WTC11 (cell line): ENCODE measurements at regions of chr3 and their contacts with region 1.

Region 1: DNA sequence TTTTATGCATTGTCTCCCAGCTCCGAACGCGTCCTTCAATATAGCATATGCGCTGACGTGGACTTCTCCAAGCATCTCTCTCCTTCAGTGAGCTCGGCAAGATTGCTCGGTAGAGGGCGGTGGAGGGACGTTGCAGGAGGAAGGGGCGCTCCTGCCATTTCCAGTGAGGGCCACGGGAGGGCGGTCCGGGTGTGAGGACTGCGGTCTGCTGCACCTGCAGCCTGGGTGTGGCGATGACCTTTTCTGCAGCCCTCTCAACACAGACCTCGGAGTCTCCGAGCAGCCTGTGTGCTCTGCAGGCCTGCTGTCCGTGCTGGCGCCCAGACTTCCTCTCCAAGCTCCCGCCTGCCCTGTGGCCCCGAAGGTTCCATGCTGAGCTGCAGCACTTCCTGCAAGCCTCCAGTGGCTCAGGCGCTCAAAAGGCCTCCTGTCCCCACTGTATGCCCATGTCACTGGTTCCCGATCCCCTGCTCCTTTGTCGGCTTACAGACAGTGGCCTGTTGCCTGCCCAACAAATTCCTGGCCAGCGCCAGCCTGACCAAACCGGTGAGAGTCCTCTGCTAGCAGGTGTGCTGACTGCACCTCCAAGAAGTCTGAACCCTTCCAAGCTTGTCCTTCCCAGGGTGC is 8.9 kb upstream of the RTP3 start:
- DNase-seq: peak; percentile 99
- ATAC-seq: peak; percentile 98
- H3K4me3 Mint-ChIP-seq: no peak overlapping the region
- H3K27ac Mint-ChIP-seq: peak overlapping the region; percentile 55; the same call in 1 of the 2 replicates
- H3K4me1 Mint-ChIP-seq: peaks cover 28% of the 10 kb centered on the region
- H3K27me3 Mint-ChIP-seq: peaks cover 12% of the 10 kb centered on the region
- CTCF ChIP-seq: peak; percentile 92

Region 2: GRCh38 chr3:46449755-46450552 is 38.9 kb before region 1 on chr3:
- CTCF ChIA-PET with region 1: interaction called, 20 read pairs
- POLR2A ChIA-PET with region 1: no interaction called
- DNase-seq: peak; percentile 50
- ATAC-seq: peak; percentile 64
- H3K4me3 Mint-ChIP-seq: no peak overlapping the region
- H3K27ac Mint-ChIP-seq: no peak overlapping the region
- H3K4me1 Mint-ChIP-seq: no peaks in the 10 kb centered on the region
- H3K27me3 Mint-ChIP-seq: no peaks in the 10 kb centered on the region; the same call in 1 of the 2 replicates
- CTCF ChIP-seq: peak; percentile 73

Region 3: GRCh38 chr3:46542801-46543201 is 54.0 kb after region 1 on chr3:
- CTCF ChIA-PET with region 1: interaction called, 15 read pairs
- POLR2A ChIA-PET with region 1: interaction called, 3 read pairs
- DNase-seq: no peak
- ATAC-seq: no peak
- H3K4me3 Mint-ChIP-seq: no peak overlapping the region
- H3K27ac Mint-ChIP-seq: peak overlapping the region; percentile 90
- H3K4me1 Mint-ChIP-seq: peaks cover 68% of the 10 kb centered on the region
- H3K27me3 Mint-ChIP-seq: no peaks in the 10 kb centered on the region
- CTCF ChIP-seq: no peak

Region 4: DNA sequence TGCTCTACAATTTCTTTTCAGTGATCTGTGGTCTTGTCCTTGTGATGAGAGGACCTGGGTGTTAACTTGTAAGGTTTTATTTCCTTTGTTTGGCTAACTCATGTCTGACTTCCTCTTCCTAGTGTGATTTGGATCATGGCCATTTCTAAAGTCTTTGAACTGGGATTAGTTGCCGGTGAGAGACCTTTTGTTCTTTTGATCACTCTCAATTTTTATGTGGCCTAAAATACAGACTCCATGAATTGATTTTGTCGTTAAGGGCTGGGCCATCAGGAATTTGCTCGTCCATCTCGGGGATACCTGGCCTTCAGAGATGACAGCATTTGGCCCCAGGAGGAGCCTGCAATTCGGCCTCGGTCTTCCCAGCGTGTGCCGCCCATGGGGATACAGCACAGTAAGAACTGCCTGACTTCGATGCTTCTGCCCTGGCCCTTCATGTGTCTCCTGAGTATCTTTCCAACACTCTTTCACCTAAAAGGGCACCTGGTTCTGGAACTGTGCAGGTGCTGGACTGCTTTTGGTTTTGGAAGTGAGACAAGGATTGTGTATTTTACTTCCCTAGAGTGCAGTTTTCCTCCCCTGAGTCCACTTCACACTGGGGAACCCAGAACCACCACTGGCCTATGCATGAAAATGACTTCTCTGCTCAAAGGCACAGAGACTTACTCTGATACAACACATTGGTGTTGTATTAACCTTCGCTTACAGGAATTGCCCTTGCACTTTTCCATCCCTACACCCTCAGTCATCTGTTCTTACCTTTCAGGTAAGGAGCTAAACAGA is 90.3 kb after region 1 on chr3:
- CTCF ChIA-PET with region 1: interaction called, 55 read pairs
- POLR2A ChIA-PET with region 1: interaction called, 3 read pairs
- DNase-seq: no peak
- ATAC-seq: no peak
- H3K4me3 Mint-ChIP-seq: peak overlapping the region; percentile 86
- H3K27ac Mint-ChIP-seq: peak overlapping the region; percentile 94
- H3K4me1 Mint-ChIP-seq: peaks cover 68% of the 10 kb centered on the region
- H3K27me3 Mint-ChIP-seq: no peaks in the 10 kb centered on the region; the same call in 1 of the 2 replicates
- CTCF ChIP-seq: no peak

Region 5: GRCh38 chr3:46607603-46608028 is 118.8 kb after region 1 on chr3:
- CTCF ChIA-PET with region 1: interaction called, 10 read pairs
- POLR2A ChIA-PET with region 1: no interaction called
- DNase-seq: peak; percentile 49
- ATAC-seq: peak; percentile 92
- H3K4me3 Mint-ChIP-seq: no peak overlapping the region
- H3K27ac Mint-ChIP-seq: no peak overlapping the region
- H3K4me1 Mint-ChIP-seq: peaks cover 56% of the 10 kb centered on the region
- H3K27me3 Mint-ChIP-seq: peaks cover 2% of the 10 kb centered on the region; the same call in 1 of the 2 replicates
- CTCF ChIP-seq: peak; percentile 21; the same call in 1 of the 2 replicates

Region 6: GRCh38 chr3:46695177-46695961 is 206.5 kb after region 1 on chr3:
- CTCF ChIA-PET with region 1: interaction called, 18 read pairs
- POLR2A ChIA-PET with region 1: no interaction called
- DNase-seq: peak; percentile 69
- ATAC-seq: peak; percentile 67
- H3K4me3 Mint-ChIP-seq: no peak overlapping the region
- H3K27ac Mint-ChIP-seq: no peak overlapping the region; the same call in 1 of the 2 replicates
- H3K4me1 Mint-ChIP-seq: peaks cover 22% of the 10 kb centered on the region
- H3K27me3 Mint-ChIP-seq: peaks cover 26% of the 10 kb centered on the region
- CTCF ChIP-seq: peak; percentile 44; the same call in 1 of the 2 replicates